ENCODE measurements at regions of chr3 and their contacts with region 1.

Region 1: GRCh38 chr3:53114011-53114400 is 16.2 kb downstream of the RFT1 start:
- DNase-seq: peak; percentile 47 to 93
- H3K4me3 ChIP-seq: no peak overlapping the region
- H3K27ac ChIP-seq: no peak overlapping the region
- H3K4me1 ChIP-seq: no peaks in the 10 kb centered on the region
- H3K27me3 ChIP-seq: no peaks in the 10 kb centered on the region
- CTCF ChIP-seq: peak; percentile 90 to 95 (median 90)
- EP300 ChIP-seq: no peak
- POLR2A ChIP-seq: no peak
- RAD21 ChIP-seq: peak; percentile 93

Region 2: DNA sequence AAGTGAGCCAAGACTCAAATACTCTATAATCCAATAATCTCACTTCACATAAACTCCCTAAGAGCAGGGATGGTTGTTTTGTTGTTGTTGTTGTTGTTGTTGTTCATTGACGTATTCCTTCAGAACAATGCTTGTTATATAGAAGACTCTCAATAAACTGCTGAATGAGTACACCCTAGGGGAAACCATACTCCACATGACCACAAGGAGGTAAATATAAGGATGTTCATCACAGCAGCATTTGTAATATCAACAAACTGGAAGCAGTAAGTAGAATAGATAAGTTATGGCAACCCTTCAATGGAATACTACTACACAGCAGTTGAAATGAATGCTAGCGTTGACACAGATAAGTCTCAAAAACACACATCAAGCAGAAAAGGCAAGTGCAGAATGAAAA is 154.2 kb before region 1 on chr3:
- CTCF ChIA-PET with region 1: no interaction called
- POLR2A ChIA-PET with region 1: no interaction called
- DNase-seq: no peak
- H3K4me3 ChIP-seq: no peak overlapping the region
- H3K27ac ChIP-seq: no peak overlapping the region
- H3K4me1 ChIP-seq: no peaks in the 10 kb centered on the region
- H3K27me3 ChIP-seq: no peaks in the 10 kb centered on the region
- CTCF ChIP-seq: peak in 1 of 3 experiments; percentile 5; a peak in 1 of 4 replicates
- EP300 ChIP-seq: no peak
- POLR2A ChIP-seq: no peak
- RAD21 ChIP-seq: no peak

Region 3: DNA sequence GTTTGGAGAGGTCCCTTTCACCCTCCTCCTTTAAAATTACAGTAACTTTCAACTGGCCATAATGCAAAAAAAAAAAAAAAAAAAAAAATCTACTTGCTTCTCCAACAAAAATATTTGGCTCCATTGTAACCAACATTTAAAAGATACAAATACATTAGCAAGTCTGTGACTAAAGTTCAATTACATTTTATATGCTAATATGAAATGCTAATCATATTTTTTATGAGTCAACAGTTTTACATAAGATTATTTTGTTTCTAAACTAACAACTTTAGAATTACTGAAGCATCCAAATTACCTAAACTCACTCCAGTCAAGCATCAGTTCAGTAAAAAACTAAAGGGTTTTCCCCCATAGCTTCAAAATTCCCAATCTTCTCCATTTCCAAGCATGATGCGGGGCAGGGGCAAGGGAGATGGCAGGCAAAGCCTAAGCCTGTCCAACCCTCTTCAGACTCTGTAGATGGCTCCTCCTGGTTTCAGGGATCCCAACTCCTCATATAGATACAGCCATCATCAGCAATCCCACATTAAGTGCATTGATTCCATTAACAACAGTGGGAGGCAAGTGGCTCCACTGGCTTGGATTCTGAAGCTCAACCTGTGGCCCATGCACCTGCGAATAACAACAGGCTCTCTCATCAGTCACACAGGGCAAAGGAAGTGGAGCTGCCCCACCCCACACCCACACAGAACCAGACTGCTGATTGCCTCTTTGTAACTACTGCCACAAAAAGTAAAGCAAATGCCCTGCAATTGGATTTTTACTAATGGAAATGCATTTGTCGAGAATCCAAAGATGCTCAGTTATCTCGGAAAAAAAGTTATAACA is 83.2 kb before region 1 on chr3:
- CTCF ChIA-PET with region 1: no interaction called
- POLR2A ChIA-PET with region 1: no interaction called
- DNase-seq: peak in 1 of 2 experiments; percentile 49
- H3K4me3 ChIP-seq: peak overlapping the region in 1 of 4 experiments; percentile 16; a peak in 1 of 8 replicates
- H3K27ac ChIP-seq: no peak overlapping the region
- H3K4me1 ChIP-seq: peaks cover 2 to 17% (median 7%) of the 10 kb centered on the region in 4 experiments; a peak in 6 of 7 replicates
- H3K27me3 ChIP-seq: no peaks in the 10 kb centered on the region
- CTCF ChIP-seq: no peak
- EP300 ChIP-seq: no peak
- POLR2A ChIP-seq: no peak
- RAD21 ChIP-seq: no peak

Region 4: GRCh38 chr3:53130179-53131061 is 16.4 kb after region 1 on chr3 and contains the start of gene RFT1:
- CTCF ChIA-PET with region 1: interaction called, 26 read pairs
- POLR2A ChIA-PET with region 1: interaction called, 4 read pairs
- DNase-seq: peak; percentile 87 to 98
- H3K4me3 ChIP-seq: peak within 1 kb of the TSS; percentile 88 to 94 (median 91)
- H3K27ac ChIP-seq: peak within 1 kb of the TSS; percentile 62
- H3K4me1 ChIP-seq: peaks cover 0 to 5% (median 3%) of the 10 kb centered on the region in 4 experiments; a peak in 3 of 7 replicates
- H3K27me3 ChIP-seq: no peaks in the 10 kb centered on the region
- CTCF ChIP-seq: peak; percentile 15 to 57 (median 36)
- EP300 ChIP-seq: peak in 1 of 2 experiments; percentile 55; a peak in 1 of 3 replicates
- POLR2A ChIP-seq: peak; percentile 89 to 97
- RAD21 ChIP-seq: peak in 1 of 2 experiments; percentile 13; a peak in 2 of 4 replicates
- total RNA-seq, gene RFT1: 24.4 and 27.7 TPM in 2 replicates

Region 5: GRCh38 chr3:53166781-53167291 is 52.8 kb after region 1 on chr3:
- CTCF ChIA-PET with region 1: interaction called, 14 read pairs
- POLR2A ChIA-PET with region 1: no interaction called
- DNase-seq: no peak
- H3K4me3 ChIP-seq: no peak overlapping the region
- H3K27ac ChIP-seq: no peak overlapping the region
- H3K4me1 ChIP-seq: peaks cover 3 to 46% (median 30%) of the 10 kb centered on the region in 4 experiments
- H3K27me3 ChIP-seq: peaks cover 0 to 3% (median 0%) of the 10 kb centered on the region in 4 experiments; a peak in 3 of 7 replicates
- CTCF ChIP-seq: no peak
- EP300 ChIP-seq: no peak
- POLR2A ChIP-seq: no peak
- RAD21 ChIP-seq: no peak

Region 6: GRCh38 chr3:53190659-53191058 is 76.7 kb after region 1 on chr3:
- CTCF ChIA-PET with region 1: interaction called, 122 read pairs
- POLR2A ChIA-PET with region 1: interaction called, 3 read pairs
- DNase-seq: no peak
- H3K4me3 ChIP-seq: no peak overlapping the region
- H3K27ac ChIP-seq: no peak overlapping the region
- H3K4me1 ChIP-seq: peaks cover 0 to 13% (median 9%) of the 10 kb centered on the region in 4 experiments; a peak in 5 of 7 replicates
- H3K27me3 ChIP-seq: no peaks in the 10 kb centered on the region; a peak in 1 of 7 replicates
- CTCF ChIP-seq: no peak
- EP300 ChIP-seq: no peak
- POLR2A ChIP-seq: no peak
- RAD21 ChIP-seq: no peak

Region 7: GRCh38 chr3:53227993-53228885 is 114.2 kb after region 1 on chr3:
- CTCF ChIA-PET with region 1: interaction called, 14 read pairs
- POLR2A ChIA-PET with region 1: interaction called, 7 read pairs
- DNase-seq: no peak
- H3K4me3 ChIP-seq: no peak overlapping the region
- H3K27ac ChIP-seq: no peak overlapping the region
- H3K4me1 ChIP-seq: no peaks in the 10 kb centered on the region; a peak in 1 of 7 replicates
- H3K27me3 ChIP-seq: no peaks in the 10 kb centered on the region
- CTCF ChIP-seq: no peak
- EP300 ChIP-seq: no peak
- POLR2A ChIP-seq: peak in 1 of 2 experiments; percentile 21; a peak in 1 of 3 replicates
- RAD21 ChIP-seq: no peak

Measured in H1 (cell line).